ENCODE measurements at regions of chr3 and their contacts with region 1.

Region 1: DNA sequence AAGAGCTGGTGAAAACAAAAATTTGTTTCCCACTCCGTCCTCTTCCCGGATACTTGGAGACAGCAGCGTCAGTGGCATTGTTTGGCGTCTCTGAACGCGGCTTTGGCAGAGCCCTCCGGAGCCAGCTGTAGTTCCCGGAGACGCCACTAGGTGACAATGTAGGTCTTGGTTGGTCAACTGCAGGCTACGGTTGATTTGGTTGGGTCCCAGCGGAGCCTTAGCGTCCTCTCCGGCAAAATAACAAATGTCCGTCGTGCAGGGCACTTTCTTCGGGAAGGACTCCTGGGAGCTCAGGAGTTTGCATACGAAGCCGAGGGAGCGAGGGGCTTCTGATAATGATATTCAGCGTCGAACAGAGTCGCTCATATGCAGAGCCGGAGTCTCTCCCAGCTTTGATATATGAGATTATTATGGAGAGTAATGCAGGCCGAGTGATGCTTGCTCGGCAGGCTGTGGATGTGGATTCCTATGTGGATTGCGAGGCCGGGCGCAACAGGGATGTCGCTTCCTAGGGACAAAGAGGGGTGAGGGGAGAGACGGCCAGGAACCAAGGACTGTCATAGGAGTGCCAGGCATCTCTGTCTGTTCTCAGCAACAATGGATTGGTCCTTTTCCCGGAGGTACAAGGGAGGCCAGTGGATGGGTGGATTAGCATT is 74.8 kb downstream of the IL20RB start:
- DNase-seq: peak; percentile 81 to 98 (median 94)

Region 2: GRCh38 chr3:136326316-136326715 is 706.3 kb before region 1 on chr3:
- intact Hi-C with region 1: no loop called
- DNase-seq: no peak

Region 3: GRCh38 chr3:137264071-137264820 is 231.7 kb after region 1 on chr3:
- intact Hi-C with region 1: no loop called
- DNase-seq: peak in 8 of 10 donors; percentile 10 to 86 (median 21)

Region 4: DNA sequence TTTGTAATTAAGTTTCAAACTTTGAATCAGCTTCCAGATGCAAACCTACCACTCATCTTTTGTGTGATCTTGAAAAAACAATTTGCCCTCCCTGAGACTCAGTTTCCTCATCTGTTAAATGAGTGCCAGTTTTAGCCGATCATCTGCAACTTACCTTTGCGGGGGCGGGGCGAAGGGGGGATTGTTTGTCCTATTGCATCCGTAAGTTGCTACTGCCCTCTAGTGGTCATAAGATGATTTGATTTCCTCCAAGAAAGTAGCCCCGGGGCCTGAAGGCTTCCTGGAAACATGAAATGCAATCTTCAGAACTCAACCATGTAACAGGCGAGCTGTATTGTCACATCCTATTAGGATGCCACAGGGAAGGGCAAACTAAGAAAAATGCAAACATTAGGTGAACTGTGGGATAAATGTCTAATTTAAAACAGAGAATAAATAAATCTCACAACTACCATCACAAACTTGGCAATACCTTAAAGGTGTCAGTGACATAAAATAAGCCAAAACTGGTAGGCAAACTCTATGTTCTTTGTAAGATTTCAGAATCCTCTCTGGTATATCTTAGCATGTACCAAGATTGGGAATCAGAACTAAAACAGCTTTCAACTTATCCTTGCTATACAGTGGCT is 913.9 kb after region 1 on chr3:
- intact Hi-C with region 1: loop called (anchors 1 kb)
- DNase-seq: peak in 6 of 10 donors; percentile 14 to 79 (median 20)

Region 5: DNA sequence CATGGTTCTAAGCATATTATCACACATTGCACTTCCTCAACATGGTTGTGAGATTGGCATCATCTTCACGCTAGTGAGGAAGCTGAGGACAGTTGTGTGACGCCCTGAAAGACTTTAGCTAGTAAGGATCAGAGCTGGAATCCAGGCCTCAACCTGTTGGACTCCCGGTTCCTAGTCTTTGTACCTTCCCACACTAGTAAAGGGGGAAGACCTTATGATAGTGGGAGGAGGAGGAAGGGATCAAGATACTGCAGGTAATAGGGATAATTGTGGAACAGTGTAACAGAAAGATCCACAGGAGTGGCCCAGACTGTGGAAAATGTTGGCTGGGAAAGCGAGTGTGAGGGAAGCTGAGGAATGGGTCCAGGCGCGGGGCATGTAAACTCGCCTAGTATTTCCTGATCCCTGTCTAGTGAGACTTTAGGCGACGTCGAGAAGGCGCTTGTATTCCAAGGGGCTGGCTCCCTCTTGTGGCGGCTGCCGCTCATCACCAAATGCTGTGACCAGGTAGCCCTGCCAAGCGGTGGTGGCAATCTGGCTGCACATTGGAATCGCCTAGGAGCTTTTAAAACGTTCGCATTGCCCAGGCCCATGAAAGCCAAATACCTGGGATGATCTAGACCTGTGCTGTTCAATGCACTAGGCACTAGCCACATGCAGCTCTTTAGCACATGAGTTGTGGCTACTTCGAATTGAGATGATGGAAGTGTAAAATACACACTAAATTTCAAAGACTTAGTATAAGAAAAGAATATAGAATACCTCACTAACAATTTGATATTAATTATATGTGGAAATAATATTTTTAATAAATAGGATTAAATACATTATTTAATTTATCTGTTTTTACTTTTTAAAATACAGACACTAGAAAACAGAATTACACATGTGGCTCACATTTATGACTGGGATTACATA is 938.6 kb after region 1 on chr3:
- intact Hi-C with region 1: loop called (anchors 10 kb)
- DNase-seq: peak; percentile 59 to 96 (median 79)

Measured in posterior cingulate gyrus (tissue), 11 donors.